Left ventricle myocardium superior (tissue), 1 donor: ENCODE measurements at regions of chr5 and their contacts with region 1.

Region 1: DNA sequence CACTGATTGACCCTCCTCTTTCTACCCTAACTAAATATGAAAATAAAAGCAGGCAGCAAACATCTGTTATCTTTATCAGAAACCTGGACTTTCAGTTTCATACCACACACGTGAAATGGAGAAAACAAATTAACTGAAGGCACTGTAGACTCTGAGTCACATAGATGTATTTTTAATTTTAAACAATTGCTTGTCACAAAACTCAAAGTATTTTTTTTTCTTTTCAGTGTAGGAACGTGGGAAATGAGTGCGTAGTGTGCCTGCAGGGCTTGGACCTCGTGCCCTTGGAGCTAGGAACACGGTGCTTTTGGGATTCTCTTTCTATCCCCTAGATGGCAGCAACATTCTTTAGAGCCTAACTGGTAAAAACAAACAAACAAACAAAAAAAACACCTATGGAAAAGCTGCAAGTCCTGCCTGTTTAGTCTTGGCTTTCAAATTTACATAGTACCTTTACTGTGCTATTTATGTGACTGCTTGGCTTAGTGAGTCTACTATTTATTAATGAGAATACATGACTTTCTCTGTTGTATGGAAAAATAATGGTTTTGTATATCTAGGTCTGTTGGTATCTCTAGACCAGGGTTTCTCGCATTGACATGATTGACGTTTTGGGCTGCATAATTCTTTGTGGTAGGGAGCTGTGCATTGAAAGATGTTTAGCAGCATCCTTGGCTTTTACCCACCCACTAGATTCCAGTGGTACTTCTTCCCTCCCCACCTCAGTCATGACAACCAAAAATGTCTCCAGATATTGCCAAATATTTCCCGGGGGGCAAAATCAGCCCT is 16.8 kb upstream of the ACTBL2 start:
- DNase-seq: no peak
- ATAC-seq: peak; percentile 64

Region 2: GRCh38 chr5:57049953-57050352 is 449.5 kb before region 1 on chr5:
- intact Hi-C with region 1: no loop called
- DNase-seq: no peak
- ATAC-seq: no peak

Region 3: DNA sequence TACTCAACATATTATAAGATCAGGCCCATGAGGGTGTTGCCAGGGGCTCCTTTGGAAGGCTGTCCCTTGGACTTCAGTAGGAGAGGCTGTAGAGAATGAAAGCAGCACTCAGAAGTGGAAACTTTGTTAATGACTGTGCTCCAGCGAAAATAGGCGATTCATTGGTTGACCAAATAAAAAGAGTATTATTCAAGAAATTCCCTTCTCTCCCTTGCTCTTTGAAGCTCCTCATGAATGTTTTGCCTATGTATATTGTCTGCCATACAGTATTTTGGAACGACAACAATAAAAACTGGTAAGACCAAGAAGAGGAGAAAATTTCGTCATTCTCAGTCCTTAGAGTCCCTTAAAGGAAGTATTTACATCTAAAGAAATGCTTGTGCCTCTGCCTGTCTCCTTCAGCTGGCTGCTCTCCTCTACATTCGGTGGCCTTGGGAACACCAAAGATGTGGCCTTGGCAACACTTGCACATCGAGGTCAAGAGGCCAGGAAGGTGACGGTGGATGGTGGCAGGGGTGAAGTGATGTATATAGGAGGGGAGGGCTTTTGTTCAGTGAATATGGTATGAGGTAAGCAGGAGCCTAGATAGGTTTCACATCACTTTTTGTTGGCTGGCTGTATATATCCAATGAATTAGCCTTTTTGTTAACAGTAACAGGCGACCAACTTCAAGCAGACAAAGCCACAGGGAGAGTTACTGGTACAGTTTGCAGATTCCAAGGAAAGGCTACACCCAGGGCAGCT is 78.1 kb after region 1 on chr5:
- intact Hi-C with region 1: no loop called
- DNase-seq: no peak
- ATAC-seq: no peak

Region 4: GRCh38 chr5:57779383-57780223 is 280.1 kb after region 1 on chr5:
- intact Hi-C with region 1: loop called (anchors 10 kb)
- DNase-seq: no peak
- ATAC-seq: peak; percentile 87

Region 5: DNA sequence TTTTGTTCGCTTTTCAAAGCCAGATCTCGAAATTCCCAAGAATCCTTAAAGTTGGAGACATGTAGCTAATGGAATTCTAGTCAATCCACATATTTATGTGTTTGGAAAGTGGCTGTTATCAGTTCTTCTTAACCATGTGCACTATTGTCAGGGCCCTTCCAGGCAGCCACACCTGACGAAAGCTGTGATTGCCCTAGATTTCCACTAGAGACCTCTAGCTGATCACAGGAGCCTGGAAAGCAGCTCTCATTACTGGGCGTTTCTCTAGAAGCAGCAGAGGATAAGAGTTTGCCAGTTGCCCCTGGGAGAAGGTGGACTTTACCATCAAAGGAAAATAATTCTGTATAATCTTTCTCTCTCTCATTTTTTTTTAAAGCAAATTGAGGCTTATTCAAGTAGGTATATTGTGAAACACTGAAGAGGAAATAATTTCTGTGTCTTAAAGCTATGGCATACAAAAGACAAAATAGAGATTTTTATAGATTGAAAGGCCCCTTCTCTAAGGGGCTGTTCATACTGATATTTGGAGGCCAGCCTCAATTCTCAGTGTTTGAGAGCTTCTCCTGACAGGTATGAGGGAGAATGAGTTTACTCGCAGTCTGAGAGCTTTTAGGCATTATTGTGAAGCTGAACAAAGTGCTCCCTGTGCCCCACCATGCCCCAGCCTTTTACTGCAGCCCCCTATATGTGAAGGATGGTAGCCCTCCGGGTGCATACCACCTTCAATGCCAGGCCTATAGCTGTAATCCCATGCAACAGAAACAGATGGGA is 388.6 kb after region 1 on chr5:
- intact Hi-C with region 1: loop called (anchors 10 kb)
- DNase-seq: peak; percentile 30
- ATAC-seq: peak; percentile 95